GM10248 (cell line): ENCODE measurements at regions of chr15 and their contacts with region 1.

Region 1: GRCh38 chr15:59410391-59410896 is 27.5 kb upstream of the FAM81A start:
- DNase-seq: no peak
- CTCF ChIP-seq: no peak

Region 2: DNA sequence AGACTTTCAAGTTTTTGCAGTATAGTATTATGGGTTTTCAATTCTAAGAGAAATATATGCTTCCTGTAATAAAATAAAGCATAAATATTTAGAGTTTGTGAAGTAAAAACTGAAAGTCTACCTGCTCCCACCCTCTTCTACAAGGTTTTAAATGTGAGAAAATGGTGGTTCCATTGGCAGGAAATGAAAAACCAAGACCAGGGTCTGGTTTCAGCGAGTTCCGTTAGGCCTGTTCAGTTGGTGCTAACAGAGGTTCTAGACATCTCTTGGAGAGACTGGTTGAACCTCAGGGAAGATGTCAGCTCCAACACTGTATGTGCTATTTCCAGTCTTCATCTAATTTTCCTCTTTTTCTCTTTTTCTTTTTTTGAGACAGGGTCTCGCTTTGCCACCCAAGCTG is 25.9 kb before region 1 on chr15:
- CTCF ChIA-PET with region 1: interaction called, 13 read pairs
- POLR2A ChIA-PET with region 1: no interaction called
- DNase-seq: peak; percentile 46
- CTCF ChIP-seq: no peak

Region 3: DNA sequence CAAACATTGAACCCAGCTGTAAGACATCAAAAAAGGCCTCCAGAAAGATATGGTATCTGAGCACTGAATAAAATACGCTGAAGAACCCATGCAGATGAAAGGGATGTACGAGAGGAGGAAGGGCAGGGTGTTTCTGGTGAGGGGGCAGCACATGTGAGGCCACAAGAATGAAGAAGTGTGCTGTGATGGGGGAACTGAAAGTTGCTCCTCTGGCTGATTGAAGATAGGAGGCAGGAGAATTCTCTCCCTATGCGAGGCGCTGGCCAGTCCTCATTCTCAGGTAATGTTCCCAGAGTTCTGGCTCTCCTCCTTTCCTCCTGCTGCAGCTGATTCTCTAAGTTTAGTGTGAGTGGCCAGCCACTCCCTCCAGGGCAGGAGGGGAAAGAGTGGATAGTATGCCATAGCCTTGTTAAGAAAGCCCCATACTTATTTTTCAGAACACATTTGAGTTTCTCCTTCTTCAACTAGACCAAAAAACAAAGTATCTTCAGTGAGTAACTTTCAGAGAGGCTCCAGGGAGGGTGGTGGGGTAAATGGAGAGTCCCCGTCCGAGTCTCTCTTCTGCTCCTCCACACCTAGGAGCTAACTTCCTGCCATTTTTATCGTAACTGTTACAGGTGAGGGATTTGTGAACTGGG is 10.9 kb before region 1 on chr15:
- CTCF ChIA-PET with region 1: interaction called, 60 read pairs
- POLR2A ChIA-PET with region 1: no interaction called
- DNase-seq: peak; percentile 74
- CTCF ChIP-seq: no peak

Region 4: GRCh38 chr15:59420986-59421618 is 10.7 kb after region 1 on chr15:
- CTCF ChIA-PET with region 1: interaction called, 18 read pairs
- POLR2A ChIA-PET with region 1: interaction called, 3 read pairs
- DNase-seq: no peak
- CTCF ChIP-seq: no peak